ENCODE measurements at regions of chr20 and their contacts with region 1.

Region 1: GRCh38 chr20:63537525-63538203 is 488 bp upstream of the PTK6 start:
- DNase-seq: peak; percentile 94 to 97
- H3K4me3 ChIP-seq: peak overlapping the region; percentile 50
- H3K4me3 Mint-ChIP-seq: peak overlapping the region; percentile 65
- H3K27ac Mint-ChIP-seq: peak overlapping the region; percentile 36
- H3K4me1 ChIP-seq: peaks cover 28% of the 10 kb centered on the region
- H3K4me1 Mint-ChIP-seq: no peaks in the 10 kb centered on the region
- H3K27me3 ChIP-seq: no peaks in the 10 kb centered on the region
- H3K27me3 Mint-ChIP-seq: no peaks in the 10 kb centered on the region
- CTCF ChIP-seq: peak; percentile 99 to 100

Region 2: DNA sequence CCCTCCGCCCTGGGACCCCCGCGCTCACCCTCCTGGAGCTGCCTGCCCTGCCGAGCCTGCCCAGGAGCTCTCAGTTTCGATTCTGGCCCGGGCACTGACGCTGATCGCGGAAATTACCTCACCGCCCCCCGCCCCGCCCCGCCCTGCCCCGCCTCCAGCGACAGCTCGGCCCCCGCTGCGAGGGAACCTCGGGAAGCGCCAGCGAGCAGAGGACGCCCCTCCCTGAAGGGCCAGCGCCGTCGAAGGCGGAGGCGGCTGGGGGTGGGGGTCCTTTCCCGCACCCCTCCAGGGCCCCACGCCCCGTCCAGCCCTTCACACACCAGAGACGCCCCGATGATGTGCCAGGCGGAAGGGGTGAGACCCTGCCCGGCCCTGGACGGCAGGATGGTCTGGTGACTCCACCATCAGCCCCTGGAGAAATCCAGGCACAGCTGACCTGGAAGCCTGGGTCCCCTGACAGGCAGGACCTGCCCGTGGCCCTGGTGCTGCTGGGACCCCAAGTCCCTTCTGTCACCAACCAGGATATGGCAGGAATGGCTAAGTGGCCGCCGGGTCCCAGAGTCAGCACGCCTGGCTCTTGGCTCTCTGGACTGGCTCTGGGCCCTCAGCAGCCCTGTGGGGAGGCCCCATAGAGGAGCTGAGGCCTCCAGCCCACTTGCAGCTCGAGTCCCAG is 36.6 kb after region 1 on chr20 and contains the start of gene HELZ2:
- CTCF ChIA-PET with region 1: interaction called, 34 read pairs
- POLR2A ChIA-PET with region 1: interaction called, 7 read pairs
- intact Hi-C with region 1: loop called (anchors 5 kb)
- DNase-seq: peak; percentile 82 to 85
- H3K4me3 ChIP-seq: peak within 1 kb of the TSS; percentile 91
- H3K4me3 Mint-ChIP-seq: peak within 1 kb of the TSS; percentile 76
- H3K27ac Mint-ChIP-seq: peak within 1 kb of the TSS; percentile 83
- H3K4me1 ChIP-seq: peaks cover 15% of the 10 kb centered on the region
- H3K4me1 Mint-ChIP-seq: no peaks in the 10 kb centered on the region
- H3K27me3 ChIP-seq: no peaks in the 10 kb centered on the region
- H3K27me3 Mint-ChIP-seq: peaks cover 3% of the 10 kb centered on the region
- CTCF ChIP-seq: no peak
- total RNA-seq, gene HELZ2: 35.2 and 36.5 TPM in 2 replicates

Region 3: DNA sequence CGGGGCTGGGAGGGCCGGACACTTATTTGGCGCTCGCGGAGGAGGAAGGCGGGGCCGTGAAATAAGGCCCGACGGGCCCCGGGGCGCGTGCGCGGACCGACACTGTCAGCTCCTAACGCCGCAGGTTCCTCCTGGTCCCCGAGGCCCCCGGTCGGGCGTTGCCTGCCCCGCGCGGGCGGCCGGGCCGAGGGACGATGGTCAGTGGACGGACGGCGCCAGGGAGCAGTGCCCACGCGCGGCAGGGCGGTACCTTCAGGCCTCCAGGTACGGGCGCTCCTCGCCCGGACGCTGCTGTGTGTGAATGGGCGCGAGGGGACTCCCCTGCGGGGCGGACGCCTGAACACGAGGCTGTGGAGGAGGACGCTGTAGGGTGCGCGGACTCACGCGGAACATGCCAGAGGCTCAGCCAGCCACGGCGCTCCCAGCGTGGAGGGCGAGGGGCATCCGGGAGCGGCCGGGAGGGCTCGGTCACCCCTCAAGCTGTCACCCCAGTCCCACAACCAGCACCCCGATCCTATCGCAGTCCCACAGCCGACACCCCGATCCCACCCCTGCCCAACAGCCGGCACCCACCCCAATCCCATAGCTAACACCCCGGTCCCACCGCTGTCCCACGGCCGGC is 89.6 kb after region 1 on chr20:
- CTCF ChIA-PET with region 1: interaction called, 18 read pairs
- POLR2A ChIA-PET with region 1: interaction called, 5 read pairs
- intact Hi-C with region 1: no loop called
- DNase-seq: peak; percentile 98 to 100
- H3K4me3 ChIP-seq: peak overlapping the region; percentile 91
- H3K4me3 Mint-ChIP-seq: peak overlapping the region; percentile 80
- H3K27ac Mint-ChIP-seq: peak overlapping the region; percentile 80
- H3K4me1 ChIP-seq: peaks cover 18% of the 10 kb centered on the region
- H3K4me1 Mint-ChIP-seq: peaks cover 25% of the 10 kb centered on the region
- H3K27me3 ChIP-seq: no peaks in the 10 kb centered on the region
- H3K27me3 Mint-ChIP-seq: no peaks in the 10 kb centered on the region
- CTCF ChIP-seq: no peak

Region 4: DNA sequence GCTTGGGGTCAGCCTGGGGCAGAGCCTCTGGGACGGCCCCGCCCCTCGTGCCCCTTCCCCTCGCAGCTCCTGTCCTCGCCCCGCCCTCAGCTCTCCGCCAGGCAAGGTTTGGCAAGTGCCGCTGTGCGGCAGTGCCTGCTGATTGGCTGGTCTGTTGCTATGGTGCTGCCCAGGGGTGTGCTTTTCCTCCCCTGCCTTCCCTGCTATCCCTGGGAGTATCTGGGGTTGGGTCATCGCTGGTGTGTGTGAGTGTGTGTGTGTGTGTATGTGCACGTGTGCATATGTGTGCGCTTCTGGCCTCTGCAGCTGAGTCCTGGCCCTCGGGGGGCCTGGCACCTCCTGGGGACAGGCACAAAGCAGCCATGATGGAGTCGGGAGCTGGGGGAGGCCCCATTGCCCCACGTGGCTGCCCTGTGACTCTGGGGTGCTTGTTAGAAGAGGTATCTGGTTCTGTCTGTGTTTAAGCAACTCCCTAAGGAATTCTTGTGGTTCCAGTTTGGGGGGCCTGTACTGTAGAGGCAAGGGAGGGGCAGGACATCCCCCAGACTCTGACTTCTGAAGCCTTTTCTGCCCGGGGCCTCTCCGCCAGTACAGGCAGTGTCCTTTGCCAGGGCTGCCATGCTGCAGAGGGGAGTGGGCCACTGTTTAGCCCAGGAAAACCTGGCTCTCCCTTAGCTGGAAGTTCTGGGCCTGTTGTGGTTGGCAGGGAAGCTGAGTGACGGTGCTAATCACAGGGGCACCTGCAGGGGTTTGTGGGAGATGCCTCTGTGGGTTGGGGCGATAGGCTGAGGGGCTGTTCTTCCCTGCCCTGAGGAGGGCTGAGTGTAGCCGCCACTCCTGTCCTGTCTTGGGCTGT is 127.4 kb after region 1 on chr20:
- CTCF ChIA-PET with region 1: no interaction called
- POLR2A ChIA-PET with region 1: no interaction called
- intact Hi-C with region 1: no loop called
- DNase-seq: no peak
- H3K4me3 ChIP-seq: no peak overlapping the region
- H3K4me3 Mint-ChIP-seq: no peak overlapping the region
- H3K27ac Mint-ChIP-seq: peak overlapping the region; percentile 34
- H3K4me1 ChIP-seq: no peaks in the 10 kb centered on the region
- H3K4me1 Mint-ChIP-seq: peaks cover 6% of the 10 kb centered on the region
- H3K27me3 ChIP-seq: no peaks in the 10 kb centered on the region
- H3K27me3 Mint-ChIP-seq: no peaks in the 10 kb centered on the region
- CTCF ChIP-seq: no peak

Region 5: GRCh38 chr20:63692669-63693426 is 155.2 kb after region 1 on chr20:
- CTCF ChIA-PET with region 1: interaction called, 4 read pairs
- POLR2A ChIA-PET with region 1: interaction called, 3 read pairs
- intact Hi-C with region 1: loop called (anchors 5 kb)
- DNase-seq: peak in 1 of 2 experiments; percentile 66
- H3K4me3 ChIP-seq: no peak overlapping the region
- H3K4me3 Mint-ChIP-seq: peak overlapping the region; percentile 18
- H3K27ac Mint-ChIP-seq: peak overlapping the region; percentile 94
- H3K4me1 ChIP-seq: peaks cover 12% of the 10 kb centered on the region
- H3K4me1 Mint-ChIP-seq: peaks cover 8% of the 10 kb centered on the region
- H3K27me3 ChIP-seq: no peaks in the 10 kb centered on the region
- H3K27me3 Mint-ChIP-seq: peaks cover 2% of the 10 kb centered on the region
- CTCF ChIP-seq: no peak

Region 6: DNA sequence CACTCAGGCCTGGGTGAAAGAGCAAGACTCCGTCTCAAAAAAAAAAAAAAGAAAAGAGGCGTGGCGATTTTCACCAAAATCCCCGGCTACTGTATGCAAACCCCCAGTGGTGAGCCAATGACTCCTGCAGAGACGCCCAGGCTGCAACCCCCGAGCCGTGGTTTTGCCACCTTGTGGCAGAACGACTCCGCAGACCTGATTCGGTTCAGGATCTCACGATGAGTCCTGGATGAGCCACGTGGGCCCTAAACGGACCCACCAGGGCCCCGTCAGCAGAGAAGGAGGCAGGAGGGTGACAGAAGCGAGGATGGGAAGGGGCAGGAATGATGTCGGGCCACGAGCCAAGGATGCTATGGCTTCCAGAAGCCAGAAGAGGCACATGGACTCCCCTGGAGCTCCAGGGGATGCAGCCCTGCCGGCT is 244.4 kb after region 1 on chr20:
- CTCF ChIA-PET with region 1: interaction called, 13 read pairs
- POLR2A ChIA-PET with region 1: no interaction called
- intact Hi-C with region 1: no loop called
- DNase-seq: no peak
- H3K4me3 ChIP-seq: no peak overlapping the region
- H3K4me3 Mint-ChIP-seq: no peak overlapping the region
- H3K27ac Mint-ChIP-seq: no peak overlapping the region
- H3K4me1 ChIP-seq: no peaks in the 10 kb centered on the region
- H3K4me1 Mint-ChIP-seq: no peaks in the 10 kb centered on the region
- H3K27me3 ChIP-seq: no peaks in the 10 kb centered on the region
- H3K27me3 Mint-ChIP-seq: no peaks in the 10 kb centered on the region
- CTCF ChIP-seq: peak; percentile 20 to 36

Region 7: DNA sequence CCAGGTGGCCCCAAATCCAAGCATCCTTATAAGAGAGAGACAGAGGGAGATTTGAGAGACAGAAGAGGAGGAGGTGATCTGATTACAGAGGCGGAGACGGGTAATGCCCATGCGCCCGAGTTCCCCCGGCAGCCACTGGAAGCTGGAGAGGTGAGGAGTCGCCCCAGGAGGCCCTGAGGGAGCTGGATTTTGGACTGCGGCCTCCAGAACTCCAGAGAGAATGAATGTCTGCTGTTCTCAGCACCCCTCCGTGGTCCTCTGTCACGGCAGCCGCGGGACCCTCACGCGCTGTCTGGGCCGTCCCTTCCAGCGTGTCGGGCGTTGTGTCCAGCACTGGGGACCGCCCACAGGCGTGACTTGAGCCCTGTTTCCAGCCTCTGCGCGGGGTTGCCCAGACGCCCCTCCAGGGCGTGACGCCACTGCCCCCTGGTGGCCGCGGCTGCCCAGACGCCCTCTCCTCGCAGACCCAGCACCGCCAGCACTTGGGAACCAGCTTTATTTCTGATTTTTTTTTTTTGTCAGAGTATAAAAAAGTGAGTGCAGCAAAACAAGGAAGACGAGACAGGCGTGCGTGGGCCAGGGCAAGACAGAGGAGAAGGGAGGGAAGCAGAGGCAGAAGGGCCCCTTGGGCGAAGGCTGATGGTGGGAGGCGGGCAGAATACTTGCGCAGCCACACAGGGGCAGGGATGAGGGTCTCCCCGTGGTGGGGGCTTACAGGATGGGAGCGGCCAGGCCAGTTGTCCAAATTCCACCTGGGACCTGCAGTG is 436.2 kb after region 1 on chr20:
- CTCF ChIA-PET with region 1: interaction called, 42 read pairs
- POLR2A ChIA-PET with region 1: no interaction called
- intact Hi-C with region 1: loop called (anchors 1 kb)
- DNase-seq: peak; percentile 92 to 98
- H3K4me3 ChIP-seq: peak overlapping the region; percentile 38
- H3K4me3 Mint-ChIP-seq: peak overlapping the region; percentile 63
- H3K27ac Mint-ChIP-seq: peak overlapping the region; percentile 1
- H3K4me1 ChIP-seq: peaks cover 26% of the 10 kb centered on the region
- H3K4me1 Mint-ChIP-seq: peaks cover 22% of the 10 kb centered on the region
- H3K27me3 ChIP-seq: no peaks in the 10 kb centered on the region
- H3K27me3 Mint-ChIP-seq: peaks cover 3% of the 10 kb centered on the region
- CTCF ChIP-seq: peak; percentile 100

Region 8: GRCh38 chr20:64119681-64120341 is 582.1 kb after region 1 on chr20:
- CTCF ChIA-PET with region 1: no interaction called
- POLR2A ChIA-PET with region 1: no interaction called
- intact Hi-C with region 1: loop called (anchors 2 kb)
- DNase-seq: peak in 1 of 2 experiments; percentile 55
- H3K4me3 ChIP-seq: no peak overlapping the region
- H3K4me3 Mint-ChIP-seq: no peak overlapping the region
- H3K27ac Mint-ChIP-seq: peak overlapping the region; percentile 44
- H3K4me1 ChIP-seq: no peaks in the 10 kb centered on the region
- H3K4me1 Mint-ChIP-seq: no peaks in the 10 kb centered on the region
- H3K27me3 ChIP-seq: no peaks in the 10 kb centered on the region
- H3K27me3 Mint-ChIP-seq: peaks cover 14% of the 10 kb centered on the region
- CTCF ChIP-seq: no peak

Measured in Caco-2 (cell line).